GM23248 (cell line): ENCODE measurements at regions of chr11 and their contacts with region 1.

Region 1: GRCh38 chr11:120500414-120501071 is 11.0 kb upstream of the GRIK4 start:
- DNase-seq: peak; percentile 78
- H3K4me3 ChIP-seq: peak overlapping the region; percentile 39
- H3K27ac ChIP-seq: peak overlapping the region; percentile 54
- H3K4me1 ChIP-seq: peaks cover 9% of the 10 kb centered on the region
- H3K27me3 ChIP-seq: no peaks in the 10 kb centered on the region

Region 2: DNA sequence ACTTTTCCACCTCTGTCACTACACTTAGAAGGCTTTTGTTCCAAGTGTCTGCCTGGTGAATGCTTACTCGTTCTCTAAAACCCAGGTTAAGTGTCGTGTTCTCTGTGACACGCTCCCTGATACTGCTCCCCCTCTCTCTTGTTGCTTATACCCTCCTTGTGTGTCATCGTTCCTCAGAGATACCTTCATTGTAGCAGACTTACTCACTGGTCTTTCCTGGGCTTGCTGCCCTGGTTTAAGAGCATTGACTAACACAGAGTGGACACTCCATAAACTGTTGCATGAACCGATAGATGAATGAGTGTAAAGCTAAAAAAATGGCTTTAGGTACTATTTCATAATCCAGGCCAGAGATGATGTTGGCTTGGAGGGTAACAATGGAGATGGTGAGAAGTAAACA is 182.3 kb after region 1 on chr11:
- in situ Hi-C with region 1: loop called (anchors 10 kb)
- DNase-seq: peak; percentile 92
- H3K4me3 ChIP-seq: no peak overlapping the region
- H3K27ac ChIP-seq: no peak overlapping the region
- H3K4me1 ChIP-seq: peaks cover 4% of the 10 kb centered on the region; the same call in 1 of the 2 replicates
- H3K27me3 ChIP-seq: peaks cover 8% of the 10 kb centered on the region; the same call in 1 of the 2 replicates

Region 3: GRCh38 chr11:120703358-120704152 is 203.0 kb after region 1 on chr11:
- in situ Hi-C with region 1: no loop called
- DNase-seq: no peak
- H3K4me3 ChIP-seq: no peak overlapping the region
- H3K27ac ChIP-seq: no peak overlapping the region
- H3K4me1 ChIP-seq: no peaks in the 10 kb centered on the region
- H3K27me3 ChIP-seq: peaks cover 8% of the 10 kb centered on the region; the same call in 1 of the 2 replicates

Region 4: GRCh38 chr11:120952461-120953434 is 452.2 kb after region 1 on chr11:
- in situ Hi-C with region 1: loop called (anchors 10 kb)
- DNase-seq: peak; percentile 87
- H3K4me3 ChIP-seq: peak overlapping the region; percentile 42; the same call in 1 of the 2 replicates
- H3K27ac ChIP-seq: no peak overlapping the region
- H3K4me1 ChIP-seq: no peaks in the 10 kb centered on the region
- H3K27me3 ChIP-seq: peaks cover 13% of the 10 kb centered on the region; the same call in 1 of the 2 replicates

Region 5: GRCh38 chr11:120991830-120992686 is 491.5 kb after region 1 on chr11:
- in situ Hi-C with region 1: no loop called
- DNase-seq: no peak
- H3K4me3 ChIP-seq: no peak overlapping the region
- H3K27ac ChIP-seq: no peak overlapping the region
- H3K4me1 ChIP-seq: no peaks in the 10 kb centered on the region
- H3K27me3 ChIP-seq: peaks cover 49% of the 10 kb centered on the region